GM12878 (cell line): ENCODE measurements at regions of chr3 and their contacts with region 1.

Region 1: DNA sequence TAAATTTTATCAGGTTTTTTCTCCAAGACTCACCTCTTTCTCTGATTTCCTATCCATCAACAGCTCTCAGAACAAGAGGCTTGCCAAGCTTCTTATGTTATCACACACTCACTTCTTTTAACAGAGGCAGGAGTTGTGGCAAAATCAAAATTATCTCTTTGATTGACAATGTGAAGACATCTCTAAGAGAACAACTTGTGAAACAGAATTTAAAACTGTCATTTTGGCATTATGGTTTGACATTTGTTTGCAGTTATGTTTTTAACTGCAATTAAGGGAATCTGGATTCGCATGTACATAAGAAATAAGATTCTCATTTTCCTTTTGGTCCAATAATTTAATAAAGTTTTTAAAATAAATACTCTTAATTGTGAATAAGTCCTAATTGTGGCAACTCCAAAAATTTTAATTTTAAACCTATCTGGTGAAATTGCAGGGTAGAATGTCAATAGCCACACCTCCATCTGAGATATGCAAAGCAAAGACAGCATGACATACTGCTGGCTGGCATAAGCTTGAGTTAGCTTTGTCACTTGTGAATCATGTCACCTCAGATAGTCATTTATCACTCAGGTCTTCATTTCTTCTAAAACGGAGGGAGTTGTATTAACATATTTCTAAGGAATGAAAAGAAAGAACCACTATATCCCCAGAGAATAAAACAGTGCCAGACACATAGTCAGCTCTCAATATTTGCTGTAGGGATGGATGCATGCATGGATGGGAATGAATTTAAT is 158.6 kb downstream of the CCNL1 start:
- DNase-seq: no peak
- ATAC-seq: no peak
- H3K4me3 ChIP-seq: no peak overlapping the region
- H3K27ac ChIP-seq: no peak overlapping the region
- H3K4me1 ChIP-seq: no peaks in the 10 kb centered on the region
- H3K27me3 ChIP-seq: no peaks in the 10 kb centered on the region
- CTCF ChIP-seq: no peak
- EP300 ChIP-seq: no peak
- POLR2A ChIP-seq: no peak
- RAD21 ChIP-seq: no peak

Region 2: GRCh38 chr3:156943430-156943829 is 58.0 kb before region 1 on chr3:
- CTCF ChIA-PET with region 1: no interaction called
- POLR2A ChIA-PET with region 1: no interaction called
- RAD21 ChIA-PET with region 1: no interaction called
- SMC1A ChIA-PET with region 1: no interaction called
- in situ Hi-C with region 1: no loop called
- intact Hi-C with region 1: no loop called
- DNase-seq: no peak
- ATAC-seq: no peak
- H3K4me3 ChIP-seq: no peak overlapping the region
- H3K27ac ChIP-seq: no peak overlapping the region
- H3K4me1 ChIP-seq: no peaks in the 10 kb centered on the region
- H3K27me3 ChIP-seq: no peaks in the 10 kb centered on the region
- CTCF ChIP-seq: no peak
- EP300 ChIP-seq: no peak
- POLR2A ChIP-seq: no peak
- RAD21 ChIP-seq: no peak

Region 3: GRCh38 chr3:157023226-157023625 is 21.8 kb after region 1 on chr3:
- CTCF ChIA-PET with region 1: no interaction called
- POLR2A ChIA-PET with region 1: no interaction called
- RAD21 ChIA-PET with region 1: no interaction called
- SMC1A ChIA-PET with region 1: interaction called, 10 read pairs
- in situ Hi-C with region 1: no loop called
- intact Hi-C with region 1: no loop called
- DNase-seq: no peak
- ATAC-seq: no peak
- H3K4me3 ChIP-seq: no peak overlapping the region
- H3K27ac ChIP-seq: no peak overlapping the region
- H3K4me1 ChIP-seq: no peaks in the 10 kb centered on the region
- H3K27me3 ChIP-seq: no peaks in the 10 kb centered on the region
- CTCF ChIP-seq: no peak
- EP300 ChIP-seq: no peak
- POLR2A ChIP-seq: no peak
- RAD21 ChIP-seq: no peak